ENCODE measurements at regions of chr5 and their contacts with region 1.

Region 1: GRCh38 chr5:64958757-64959391 is 190.1 kb downstream of the CWC27 start:
- DNase-seq: no peak
- H3K4me3 ChIP-seq: no peak overlapping the region
- H3K27ac ChIP-seq: no peak overlapping the region
- H3K27me3 ChIP-seq: no peaks in the 10 kb centered on the region
- CTCF ChIP-seq: peak; percentile 49 to 80 (median 64)

Region 2: DNA sequence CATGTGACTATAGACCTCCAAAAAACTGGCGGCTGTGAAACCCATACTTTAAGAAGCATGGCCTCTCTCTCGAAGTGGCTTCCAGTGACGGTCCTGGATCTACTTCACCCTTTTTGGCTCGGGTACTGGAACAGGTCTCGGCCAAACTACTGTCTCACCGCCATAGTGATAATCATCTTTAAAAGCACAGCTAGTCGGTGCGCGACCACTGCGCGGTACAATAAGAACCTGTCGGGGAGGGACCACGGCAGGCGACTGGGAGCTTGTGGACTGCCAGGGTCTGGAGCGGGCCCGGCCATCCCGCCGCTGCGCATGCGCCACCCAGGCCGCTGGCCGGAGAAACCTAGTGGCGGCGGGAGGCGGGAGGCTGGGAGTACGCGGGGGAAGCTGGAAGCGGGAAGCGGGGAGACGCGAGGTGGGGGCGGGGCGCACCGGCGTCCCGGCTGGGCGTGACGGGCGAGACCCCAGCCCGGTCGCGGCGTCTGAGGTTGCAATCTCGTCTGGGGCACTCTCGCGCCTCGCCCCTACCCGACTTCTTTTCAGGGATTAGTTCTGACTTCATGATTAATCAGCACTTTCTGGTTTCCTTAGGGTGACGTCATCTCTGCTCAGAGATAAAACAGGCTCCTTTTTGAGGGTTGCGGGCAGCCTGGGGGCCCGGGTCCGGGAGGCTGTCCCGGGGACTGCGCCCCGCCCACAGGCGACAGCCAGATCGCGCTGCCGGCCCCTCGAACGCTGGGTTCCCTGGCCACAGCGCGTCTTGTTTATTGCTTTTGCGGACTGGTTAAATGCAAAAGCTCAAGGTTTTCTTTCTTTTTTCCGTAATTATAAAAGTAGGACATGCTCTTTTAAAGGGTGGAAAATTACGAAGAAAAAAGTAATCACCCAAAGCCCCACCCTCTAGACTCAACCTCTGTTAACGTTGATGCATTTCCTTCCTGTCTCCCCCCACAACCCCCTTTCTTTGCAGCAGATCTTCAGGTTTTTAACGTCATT is 76.6 kb after region 1 on chr5:
- intact Hi-C with region 1: loop called in 1 of 2 experiments (anchors 5 kb)
- DNase-seq: peak; percentile 80 to 94 (median 86)
- H3K4me3 ChIP-seq: peak overlapping the region; percentile 49 to 87 (median 73)
- H3K27ac ChIP-seq: peak overlapping the region; percentile 43 to 99 (median 96)
- H3K27me3 ChIP-seq: no peaks in the 10 kb centered on the region
- CTCF ChIP-seq: peak in 43 of 56 donors; percentile 6 to 61 (median 34)

Measured in dorsolateral prefrontal cortex (tissue), 120 donors.